Activated T-helper 1 cell treated with anti-CD3 and anti-CD28 coated beads, Interleukin-12 subunit alpha, Interleukin-12 subunit beta, Interleukin-2, Interleukin-4 antibody, amounts not matched to agents 30 ng/mL and 10 ng/mL and 1 ng/mL, durations not matched to agents 14 hours and 24 hours and 36 hours (primary cell): ENCODE measurements at regions of chr6 and their contacts with region 1.

Region 1: DNA sequence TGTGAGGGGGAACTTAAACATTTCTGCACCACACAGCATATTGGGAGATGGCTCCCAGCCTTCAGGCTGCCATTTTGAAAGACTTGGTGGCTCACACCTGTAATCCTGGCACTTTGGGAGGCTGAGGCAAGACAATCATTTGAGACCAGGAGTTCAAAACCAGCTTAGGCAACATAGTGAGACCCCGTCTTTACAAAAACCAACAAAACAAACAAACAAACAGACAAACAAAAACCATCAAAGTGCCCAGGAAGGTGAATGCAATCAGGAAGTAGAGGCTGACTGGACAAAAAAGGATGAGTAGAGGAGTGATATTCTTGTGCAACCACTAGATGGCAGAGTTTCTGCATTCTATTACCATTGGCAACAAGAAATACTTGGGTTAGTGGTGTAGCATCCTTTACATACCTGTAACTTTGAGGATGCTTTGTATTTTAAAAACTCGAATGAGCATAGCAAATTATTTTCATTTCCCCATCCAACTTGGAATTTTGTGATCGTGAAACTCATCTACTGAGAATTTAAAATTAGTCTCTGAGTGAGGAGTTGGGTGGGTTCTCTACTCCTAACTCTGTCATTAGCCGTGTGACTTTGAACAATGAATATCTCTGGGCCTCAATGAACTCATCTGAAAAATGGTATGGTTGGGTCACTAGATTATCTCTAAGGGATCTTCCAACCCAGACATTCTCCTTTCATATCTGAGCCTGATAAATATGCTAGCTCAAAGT is 84.4 kb downstream of the CRYBG1 start:
- DNase-seq: peak; percentile 16
- H3K4me3 Mint-ChIP-seq: no peak overlapping the region
- H3K27ac Mint-ChIP-seq: no peak overlapping the region
- H3K4me1 Mint-ChIP-seq: peaks cover 20% of the 10 kb centered on the region
- H3K27me3 Mint-ChIP-seq: peaks cover 20% of the 10 kb centered on the region

Region 2: DNA sequence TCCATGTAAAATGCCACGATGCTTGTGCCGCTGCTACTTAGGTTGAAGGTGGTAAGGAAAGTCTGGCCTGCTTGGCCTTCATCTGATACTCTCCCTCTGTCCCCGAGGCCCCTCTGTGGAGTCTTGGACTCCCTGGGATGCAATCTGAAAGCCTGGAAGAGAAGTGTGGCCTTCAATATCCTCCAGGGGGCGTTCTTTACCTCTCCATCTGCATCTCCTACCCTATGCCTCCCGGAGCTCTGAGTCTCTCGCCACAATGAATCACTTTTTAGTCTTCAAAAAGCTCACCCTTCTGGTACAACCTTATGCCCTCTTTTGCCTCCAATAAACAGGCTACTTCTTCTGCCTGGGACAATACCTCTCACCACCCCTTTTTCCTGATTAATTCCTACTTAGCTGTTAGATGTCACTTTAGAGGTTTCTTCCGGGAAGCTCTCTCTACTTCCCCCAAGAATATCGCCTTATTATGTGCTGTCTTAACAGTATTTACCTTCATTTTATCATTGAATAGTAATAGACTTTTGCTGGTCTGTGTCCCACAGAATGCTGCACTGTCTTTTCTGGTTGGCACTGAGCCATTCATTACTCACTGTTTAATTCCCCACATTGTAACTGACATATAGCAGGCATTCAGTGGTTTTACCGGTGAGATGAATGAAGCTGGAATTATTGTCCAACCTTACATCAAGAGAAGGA is 105.5 kb before region 1 on chr6:
- intact Hi-C with region 1: loop called (anchors 1 kb)
- DNase-seq: peak; percentile 27
- H3K4me3 Mint-ChIP-seq: no peak overlapping the region
- H3K27ac Mint-ChIP-seq: no peak overlapping the region
- H3K4me1 Mint-ChIP-seq: peaks cover 8% of the 10 kb centered on the region
- H3K27me3 Mint-ChIP-seq: peaks cover 18% of the 10 kb centered on the region

Region 3: GRCh38 chr6:106512048-106512967 is 67.4 kb after region 1 on chr6:
- intact Hi-C with region 1: loop called (anchors 2 kb)
- DNase-seq: peak; percentile 81
- H3K4me3 Mint-ChIP-seq: peak overlapping the region; percentile 91
- H3K27ac Mint-ChIP-seq: peak overlapping the region; percentile 93
- H3K4me1 Mint-ChIP-seq: peaks cover 58% of the 10 kb centered on the region
- H3K27me3 Mint-ChIP-seq: peaks cover 21% of the 10 kb centered on the region

Region 4: DNA sequence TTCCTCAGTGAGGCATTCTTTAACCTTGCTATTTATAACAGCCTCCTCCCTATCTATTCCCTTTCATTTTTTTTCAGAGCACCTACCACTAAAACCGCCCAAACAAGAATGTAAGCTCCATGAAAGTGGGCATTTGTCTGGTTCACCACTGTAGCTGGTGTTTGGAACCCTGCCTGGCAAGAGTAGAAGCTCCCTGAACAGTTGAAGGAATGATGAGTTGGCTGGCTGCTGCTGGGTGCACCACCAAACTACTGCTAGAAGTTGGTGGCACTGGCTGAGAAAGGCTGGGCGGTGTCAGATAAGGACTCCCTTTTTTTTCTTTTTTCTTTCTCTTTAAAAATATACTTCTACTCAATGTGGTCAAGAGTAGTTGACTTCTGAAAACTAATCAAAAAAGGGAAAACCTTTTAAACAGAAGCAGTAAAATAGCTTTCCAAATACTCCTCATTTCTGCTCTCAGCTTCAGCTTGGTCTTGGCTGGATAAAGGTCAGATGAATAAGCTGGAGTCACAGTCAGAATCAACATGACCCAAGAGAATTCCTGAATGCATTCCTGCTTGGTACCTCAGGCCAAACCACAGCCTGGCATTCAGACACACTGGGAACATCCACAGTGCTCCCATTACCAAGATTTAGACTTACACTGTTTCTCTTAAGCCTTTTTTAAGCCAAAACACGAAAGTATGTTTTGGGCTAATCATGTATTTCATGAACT is 146.3 kb after region 1 on chr6:
- intact Hi-C with region 1: no loop called
- DNase-seq: no peak
- H3K4me3 Mint-ChIP-seq: no peak overlapping the region
- H3K27ac Mint-ChIP-seq: no peak overlapping the region
- H3K4me1 Mint-ChIP-seq: no peaks in the 10 kb centered on the region
- H3K27me3 Mint-ChIP-seq: peaks cover 2% of the 10 kb centered on the region

Region 5: DNA sequence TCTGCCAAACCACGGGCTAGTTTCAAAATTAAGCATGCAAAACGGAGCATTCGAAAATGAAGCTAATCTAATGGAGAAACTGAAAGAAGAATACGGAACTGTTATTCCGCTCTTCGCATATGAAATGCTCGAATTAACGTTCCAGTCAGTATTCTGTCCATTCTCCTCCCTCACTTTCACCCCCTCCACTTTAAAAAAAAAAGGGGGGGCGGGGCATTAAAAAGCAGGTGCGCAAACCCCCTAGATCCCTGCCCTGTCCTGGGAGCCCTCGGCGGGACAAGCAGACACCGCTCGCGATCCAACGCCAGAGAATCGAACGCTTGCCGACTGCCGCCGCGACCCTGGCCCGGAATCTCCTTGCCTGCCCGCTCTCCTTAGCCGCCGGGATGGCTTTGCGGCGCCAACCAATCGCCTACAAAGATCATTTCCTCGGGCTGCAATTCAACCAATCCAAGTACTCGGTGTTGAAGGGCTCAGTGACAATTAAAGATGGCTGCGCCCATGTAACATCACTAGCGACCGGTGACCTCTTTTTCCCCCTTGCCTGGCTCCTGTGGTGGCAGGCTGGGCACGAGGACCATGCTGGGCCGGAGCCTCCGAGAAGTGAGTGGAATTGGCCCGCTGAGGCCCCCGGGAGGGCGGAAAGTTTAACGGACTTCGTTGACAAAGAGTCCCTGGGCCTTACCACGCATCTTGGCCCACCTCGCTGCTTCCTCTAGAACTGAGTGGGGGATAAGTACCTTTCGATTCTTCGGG is 184.3 kb after region 1 on chr6 and contains the starts of genes QRSL1 and RTN4IP1:
- intact Hi-C with region 1: loop called (anchors 1 kb)
- DNase-seq: peak; percentile 84
- H3K4me3 Mint-ChIP-seq: peak within 1 kb of the TSS; percentile 95
- H3K27ac Mint-ChIP-seq: peak within 1 kb of the TSS; percentile 98
- H3K4me1 Mint-ChIP-seq: peaks cover 33% of the 10 kb centered on the region
- H3K27me3 Mint-ChIP-seq: no peaks in the 10 kb centered on the region
- total RNA-seq, gene QRSL1: 18.6 and 21.9 TPM in 2 replicates
- total RNA-seq, gene RTN4IP1: 6.4 and 6.8 TPM in 2 replicates

Region 6: DNA sequence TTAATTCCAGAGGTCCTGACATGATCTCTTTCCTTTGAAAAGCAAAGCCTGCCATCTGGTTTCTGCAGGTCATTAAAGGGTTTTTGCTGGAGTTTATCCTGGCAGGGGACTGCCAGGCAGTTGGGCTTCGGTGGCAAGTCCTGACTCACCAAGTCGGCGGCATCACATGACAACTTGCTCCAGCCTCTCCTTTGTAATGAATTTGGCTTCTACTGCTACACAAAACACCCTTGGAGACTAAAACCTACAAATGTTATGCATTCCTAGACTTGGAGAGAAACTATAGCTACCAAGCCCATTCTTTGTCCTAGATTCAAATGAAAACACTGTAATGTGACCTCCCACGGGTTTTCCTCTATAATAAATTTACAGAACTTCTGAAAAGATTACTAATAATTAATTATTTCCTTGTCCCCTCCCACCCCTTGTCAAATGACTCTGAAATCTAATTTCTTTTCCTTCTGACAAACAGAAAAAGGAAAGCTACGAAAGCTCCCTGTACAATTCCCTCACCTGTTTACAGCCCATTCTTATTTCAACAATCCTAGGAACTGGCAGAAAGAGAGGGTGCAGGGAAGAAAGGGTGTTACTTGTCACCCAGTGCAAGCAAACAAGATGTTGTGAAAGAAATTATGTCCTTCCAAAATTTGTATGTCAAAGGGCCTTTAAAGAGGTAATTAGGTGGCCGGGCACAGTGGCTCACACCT is 247.3 kb after region 1 on chr6:
- intact Hi-C with region 1: no loop called
- DNase-seq: no peak
- H3K4me3 Mint-ChIP-seq: no peak overlapping the region
- H3K27ac Mint-ChIP-seq: no peak overlapping the region
- H3K4me1 Mint-ChIP-seq: no peaks in the 10 kb centered on the region
- H3K27me3 Mint-ChIP-seq: peaks cover 8% of the 10 kb centered on the region

Region 7: DNA sequence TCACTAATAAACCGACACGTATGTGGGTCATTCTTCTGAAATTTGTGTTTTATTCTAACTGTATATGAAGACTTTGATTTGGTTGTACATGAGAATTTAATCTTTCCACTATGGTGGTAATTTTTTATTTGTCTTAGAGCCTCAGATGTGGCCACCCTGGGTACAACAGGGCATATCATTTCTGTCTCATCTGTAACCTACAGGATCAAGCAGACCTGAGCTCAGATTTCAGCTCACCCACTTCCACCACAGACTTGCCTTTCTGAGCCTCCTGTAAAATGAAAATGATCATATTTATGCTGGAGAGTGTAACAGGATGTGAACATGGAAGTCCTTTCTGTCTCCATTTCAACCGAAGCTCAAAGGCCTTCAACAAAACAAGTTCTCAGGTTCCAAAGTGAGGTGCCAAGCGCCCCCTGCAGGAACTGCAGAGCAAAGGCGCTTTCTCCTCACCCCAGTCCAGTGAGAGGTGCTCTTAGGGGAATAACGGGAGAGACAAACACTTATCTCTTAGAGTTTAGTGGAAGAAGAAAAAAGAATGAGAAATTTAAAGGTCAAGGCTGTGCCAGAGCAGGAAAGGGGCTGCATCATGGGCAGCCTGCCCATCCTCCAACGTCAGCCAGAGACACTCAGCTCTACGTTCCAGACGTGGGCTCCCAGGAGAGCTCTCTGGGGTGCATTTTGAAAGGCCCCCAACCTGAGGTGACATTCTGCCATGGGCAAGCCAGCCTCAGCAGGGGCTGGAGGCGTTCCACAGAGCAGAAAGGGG is 552.6 kb after region 1 on chr6:
- intact Hi-C with region 1: loop called (anchors 1 kb)
- DNase-seq: peak; percentile 23
- H3K4me3 Mint-ChIP-seq: no peak overlapping the region
- H3K27ac Mint-ChIP-seq: no peak overlapping the region
- H3K4me1 Mint-ChIP-seq: no peaks in the 10 kb centered on the region
- H3K27me3 Mint-ChIP-seq: peaks cover 4% of the 10 kb centered on the region